Transverse colon (tissue), 4 donors: ENCODE measurements at regions of chr9 and their contacts with region 1.

Region 1: GRCh38 chr9:13688994-13689600 is 409.6 kb upstream of the MPDZ start:
- DNase-seq: no peak
- H3K4me3 ChIP-seq: no peak overlapping the region
- H3K27ac ChIP-seq: no peak overlapping the region
- H3K4me1 ChIP-seq: peaks cover 0 to 3% (median 0%) of the 10 kb centered on the region in 4 donors
- H3K27me3 ChIP-seq: no peaks in the 10 kb centered on the region
- CTCF ChIP-seq: peak in 1 of 5 experiments; percentile 23
- EP300 ChIP-seq: no peak
- POLR2A ChIP-seq: no peak

Region 2: DNA sequence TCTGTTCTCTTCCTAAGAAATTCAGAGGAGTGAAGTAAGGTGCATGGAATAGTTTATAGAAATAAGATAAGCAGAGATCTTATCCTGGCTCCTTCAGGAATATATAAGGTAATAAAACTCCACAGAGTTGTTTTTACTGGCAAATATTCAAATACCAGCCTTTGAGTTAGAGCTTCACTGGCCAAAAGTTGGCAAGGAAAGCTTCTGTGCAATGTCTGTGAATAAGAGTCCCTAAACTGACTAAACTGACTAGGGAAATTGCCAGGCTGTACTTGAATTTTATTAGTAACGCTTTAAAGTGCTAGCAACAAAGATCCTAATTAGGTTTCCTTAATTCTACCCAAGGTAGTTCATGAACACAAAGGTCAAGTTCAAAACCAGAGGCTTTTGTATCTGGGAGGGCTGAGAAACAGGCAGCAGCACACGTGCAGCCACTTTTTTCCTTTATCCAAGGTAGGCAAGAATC is 278.5 kb before region 1 on chr9:
- in situ Hi-C with region 1: no loop called
- intact Hi-C with region 1: no loop called
- DNase-seq: no peak
- H3K4me3 ChIP-seq: no peak overlapping the region
- H3K27ac ChIP-seq: no peak overlapping the region
- H3K4me1 ChIP-seq: peaks cover 0 to 3% (median 0%) of the 10 kb centered on the region in 4 donors
- H3K27me3 ChIP-seq: no peaks in the 10 kb centered on the region
- CTCF ChIP-seq: no peak
- EP300 ChIP-seq: no peak
- POLR2A ChIP-seq: no peak

Region 3: GRCh38 chr9:13787234-13787833 is 98.2 kb after region 1 on chr9:
- in situ Hi-C with region 1: loop called in 1 of 4 experiments (anchors 25 kb)
- intact Hi-C with region 1: no loop called
- DNase-seq: no peak
- H3K4me3 ChIP-seq: no peak overlapping the region
- H3K27ac ChIP-seq: peak overlapping the region; percentile 4 to 31 (median 14)
- H3K4me1 ChIP-seq: peaks cover 0 to 16% (median 4%) of the 10 kb centered on the region in 4 donors
- H3K27me3 ChIP-seq: no peaks in the 10 kb centered on the region
- CTCF ChIP-seq: no peak
- EP300 ChIP-seq: no peak
- POLR2A ChIP-seq: no peak